B cell (primary cell): ENCODE measurements at regions of chr12 and their contacts with region 1.

Region 1: GRCh38 chr12:96399919-96400797 is at the start of gene CDK17:
- DNase-seq: peak; percentile 95
- ATAC-seq: peak; percentile 73
- H3K4me3 ChIP-seq: peak within 1 kb of the TSS; percentile 73 to 98 (median 86)
- H3K4me3 Mint-ChIP-seq: peak within 1 kb of the TSS; percentile 95
- H3K27ac ChIP-seq: peak within 1 kb of the TSS; percentile 77 to 99
- H3K27ac Mint-ChIP-seq: peak within 1 kb of the TSS; percentile 98
- H3K4me1 ChIP-seq: peaks cover 21 to 28% of the 10 kb centered on the region in 2 donors
- H3K4me1 Mint-ChIP-seq: peaks cover 53% of the 10 kb centered on the region
- H3K27me3 ChIP-seq: no peaks in the 10 kb centered on the region
- H3K27me3 Mint-ChIP-seq: no peaks in the 10 kb centered on the region
- CTCF ChIP-seq: no peak
- total RNA-seq, gene CDK17: 87.8 and 96.3 TPM in 2 replicates

Region 2: GRCh38 chr12:95942524-95943329 is 457.4 kb before region 1 on chr12 and contains the start of gene CCDC38:
- CTCF ChIA-PET with region 1: no interaction called
- POLR2A ChIA-PET with region 1: interaction called, 3 read pairs
- intact Hi-C with region 1: loop called (anchors 5 kb)
- DNase-seq: peak; percentile 85
- ATAC-seq: peak; percentile 88
- H3K4me3 ChIP-seq: peak within 1 kb of the TSS; percentile 68 to 94 (median 89)
- H3K4me3 Mint-ChIP-seq: peak within 1 kb of the TSS; percentile 98
- H3K27ac ChIP-seq: peak within 1 kb of the TSS; percentile 71 to 87
- H3K27ac Mint-ChIP-seq: peak within 1 kb of the TSS; percentile 92
- H3K4me1 ChIP-seq: peaks cover 9 to 11% of the 10 kb centered on the region in 2 donors
- H3K4me1 Mint-ChIP-seq: peaks cover 10% of the 10 kb centered on the region
- H3K27me3 ChIP-seq: no peaks in the 10 kb centered on the region
- H3K27me3 Mint-ChIP-seq: no peaks in the 10 kb centered on the region
- CTCF ChIP-seq: no peak
- total RNA-seq, gene CCDC38: 1.00 and 1.3 TPM in 2 replicates

Region 3: DNA sequence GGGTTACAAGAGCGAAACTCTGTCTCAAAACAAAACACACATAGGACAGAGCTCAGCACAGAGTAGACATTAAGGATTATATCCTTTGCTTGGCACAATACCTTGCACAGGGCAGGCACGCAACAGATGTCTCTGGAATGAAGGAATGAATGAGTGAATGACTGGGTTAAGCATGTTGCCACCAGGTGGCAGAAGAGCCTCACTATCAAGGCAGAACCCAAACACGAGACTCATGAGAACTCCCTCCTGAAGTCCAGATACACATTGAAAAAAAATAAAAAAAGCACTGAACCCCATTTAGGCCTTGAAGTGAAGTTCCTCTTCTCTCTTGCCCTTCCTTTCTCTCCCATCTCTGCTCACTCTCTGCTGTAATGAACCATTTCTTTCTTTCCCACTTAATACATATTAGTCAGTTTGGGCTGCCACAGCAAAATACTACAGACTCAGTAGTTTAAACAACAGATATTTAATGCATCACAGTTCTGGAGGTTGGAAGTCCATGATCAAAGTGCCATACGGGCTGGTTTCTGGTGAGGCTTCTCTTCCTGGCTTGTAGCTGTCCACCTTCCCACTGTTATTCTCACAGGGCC is 338.2 kb before region 1 on chr12:
- CTCF ChIA-PET with region 1: interaction called, 16 read pairs
- POLR2A ChIA-PET with region 1: interaction called, 3 read pairs
- intact Hi-C with region 1: loop called (anchors 1 kb)
- DNase-seq: peak; percentile 91
- ATAC-seq: peak; percentile 97
- H3K4me3 ChIP-seq: peak overlapping the region in 1 of 5 experiments; percentile 38
- H3K4me3 Mint-ChIP-seq: peak overlapping the region; percentile 36
- H3K27ac ChIP-seq: peak overlapping the region; percentile 9 to 43
- H3K27ac Mint-ChIP-seq: peak overlapping the region; percentile 89
- H3K4me1 ChIP-seq: peaks cover 21 to 32% of the 10 kb centered on the region in 2 donors
- H3K4me1 Mint-ChIP-seq: peaks cover 25% of the 10 kb centered on the region
- H3K27me3 ChIP-seq: no peaks in the 10 kb centered on the region
- H3K27me3 Mint-ChIP-seq: no peaks in the 10 kb centered on the region
- CTCF ChIP-seq: peak; percentile 84

Region 4: GRCh38 chr12:96327346-96327745 is 72.8 kb before region 1 on chr12:
- CTCF ChIA-PET with region 1: interaction called, 6 read pairs
- POLR2A ChIA-PET with region 1: no interaction called
- intact Hi-C with region 1: loop called (anchors 5 kb)
- DNase-seq: peak; percentile 56
- ATAC-seq: peak; percentile 88
- H3K4me3 ChIP-seq: no peak overlapping the region
- H3K4me3 Mint-ChIP-seq: peak overlapping the region; percentile 16
- H3K27ac ChIP-seq: peak overlapping the region; percentile 11 to 58
- H3K27ac Mint-ChIP-seq: peak overlapping the region; percentile 76
- H3K4me1 ChIP-seq: peaks cover 29 to 33% of the 10 kb centered on the region in 2 donors
- H3K4me1 Mint-ChIP-seq: peaks cover 50% of the 10 kb centered on the region
- H3K27me3 ChIP-seq: no peaks in the 10 kb centered on the region
- H3K27me3 Mint-ChIP-seq: no peaks in the 10 kb centered on the region
- CTCF ChIP-seq: no peak

Region 5: GRCh38 chr12:96383991-96384390 is 16.2 kb before region 1 on chr12:
- CTCF ChIA-PET with region 1: interaction called, 19 read pairs
- POLR2A ChIA-PET with region 1: interaction called, 5 read pairs
- intact Hi-C with region 1: no loop called
- DNase-seq: no peak
- ATAC-seq: no peak
- H3K4me3 ChIP-seq: no peak overlapping the region
- H3K4me3 Mint-ChIP-seq: no peak overlapping the region
- H3K27ac ChIP-seq: no peak overlapping the region
- H3K27ac Mint-ChIP-seq: no peak overlapping the region
- H3K4me1 ChIP-seq: peaks cover 23% of the 10 kb centered on the region in 2 donors
- H3K4me1 Mint-ChIP-seq: peaks cover 67% of the 10 kb centered on the region
- H3K27me3 ChIP-seq: no peaks in the 10 kb centered on the region
- H3K27me3 Mint-ChIP-seq: no peaks in the 10 kb centered on the region
- CTCF ChIP-seq: no peak

Region 6: DNA sequence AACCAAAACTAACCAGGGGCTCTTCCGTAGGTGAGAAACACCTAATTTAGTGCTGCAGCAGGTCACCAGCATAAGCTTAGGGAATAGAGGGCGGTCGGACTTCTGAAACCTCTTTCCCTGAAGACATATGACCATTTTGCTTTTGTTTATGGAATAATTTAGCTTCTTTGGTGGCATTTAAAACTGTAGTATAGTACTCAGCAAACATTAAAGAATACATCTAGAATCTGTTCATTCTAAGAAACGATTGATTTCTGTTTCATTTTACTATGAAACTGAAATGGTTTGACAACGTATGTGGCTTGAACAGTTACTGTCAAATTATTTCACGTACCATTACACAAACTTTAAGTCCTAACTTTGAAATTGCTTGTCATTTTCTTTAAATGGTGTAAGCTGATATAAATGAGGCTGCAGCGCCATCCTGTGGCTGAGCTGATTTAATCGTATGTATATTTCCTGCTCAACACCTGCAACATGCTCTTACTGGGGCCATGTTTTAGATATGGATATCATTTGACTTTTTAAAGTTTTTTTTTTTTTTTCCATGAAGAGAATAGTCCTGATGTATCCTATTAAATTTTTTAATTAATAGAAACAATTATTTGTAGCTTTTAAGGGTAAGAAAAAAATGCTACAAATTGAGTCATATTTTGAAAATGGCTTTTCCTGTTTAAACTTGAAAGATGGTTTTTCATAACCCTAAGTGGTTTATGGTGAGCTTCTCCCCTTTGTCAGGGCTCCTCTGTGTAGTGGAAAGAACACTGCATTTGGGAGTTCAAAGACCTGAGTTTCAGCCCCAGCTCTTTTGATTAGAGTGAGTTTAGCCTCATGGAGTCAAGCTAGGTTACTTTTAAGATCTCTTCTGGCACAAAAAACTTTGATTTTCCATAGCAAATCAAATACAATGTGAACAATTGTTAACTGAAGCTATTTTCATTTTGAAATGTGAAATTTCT is 116.6 kb after region 1 on chr12:
- CTCF ChIA-PET with region 1: interaction called, 37 read pairs
- POLR2A ChIA-PET with region 1: interaction called, 13 read pairs
- intact Hi-C with region 1: loop called (anchors 1 kb)
- DNase-seq: peak; percentile 87
- ATAC-seq: peak; percentile 65
- H3K4me3 ChIP-seq: peak overlapping the region in 1 of 5 experiments; percentile 22
- H3K4me3 Mint-ChIP-seq: no peak overlapping the region
- H3K27ac ChIP-seq: no peak overlapping the region
- H3K27ac Mint-ChIP-seq: no peak overlapping the region
- H3K4me1 ChIP-seq: peaks cover 14 to 16% of the 10 kb centered on the region in 2 donors
- H3K4me1 Mint-ChIP-seq: peaks cover 21% of the 10 kb centered on the region
- H3K27me3 ChIP-seq: no peaks in the 10 kb centered on the region
- H3K27me3 Mint-ChIP-seq: no peaks in the 10 kb centered on the region
- CTCF ChIP-seq: peak; percentile 84